ENCODE measurements at regions of chr15 and their contacts with region 1.

Region 1: DNA sequence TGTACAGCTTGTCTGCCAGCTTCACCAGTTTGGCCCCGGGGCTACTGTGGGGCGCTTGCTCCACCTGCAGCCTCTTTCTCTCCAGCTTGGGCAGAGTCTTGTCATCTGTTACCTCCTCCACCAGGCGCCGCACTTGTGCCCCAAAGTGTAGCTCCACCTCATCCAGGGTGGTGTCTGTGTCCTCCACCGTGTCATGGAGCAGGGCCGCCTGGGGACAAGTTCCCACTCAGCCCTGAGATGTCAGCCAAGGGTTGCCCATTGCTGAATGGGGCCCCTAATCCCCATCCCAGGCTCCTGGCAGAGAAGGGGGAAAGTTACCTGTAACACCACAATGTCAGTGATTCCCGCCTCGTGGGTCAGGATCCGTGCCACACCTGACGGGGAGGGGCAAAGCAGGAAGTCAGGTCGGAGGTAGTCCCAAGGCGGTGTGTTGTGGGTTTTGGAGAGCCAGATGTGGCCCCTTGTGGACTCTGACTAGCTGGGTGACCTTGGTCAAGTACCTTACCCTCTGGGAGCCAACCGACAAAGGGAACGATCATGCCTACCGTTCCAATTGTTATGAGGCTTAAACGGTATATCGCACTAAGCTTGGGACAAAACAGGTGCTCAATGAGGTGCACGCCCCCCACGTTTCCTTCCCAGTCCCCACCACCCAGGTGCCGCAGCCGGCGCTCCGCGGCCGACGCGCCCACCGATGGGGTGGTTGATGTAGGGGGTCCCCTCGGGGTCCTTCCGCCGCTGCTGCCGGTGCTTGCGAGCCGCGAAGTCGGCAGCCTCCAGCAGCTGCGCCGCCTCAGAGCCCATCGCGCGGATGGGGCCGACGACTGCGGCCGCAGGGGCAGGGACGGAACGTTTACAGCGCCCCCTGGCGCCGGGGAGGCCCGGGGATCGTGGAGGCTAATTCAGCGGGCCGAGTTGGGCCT is at the start of gene HDDC3:
- DNase-seq: peak; percentile 95
- ATAC-seq: peak; percentile 56
- H3K4me3 Mint-ChIP-seq: peak within 1 kb of the TSS; percentile 96
- H3K27ac Mint-ChIP-seq: peak within 1 kb of the TSS; percentile 97
- H3K4me1 Mint-ChIP-seq: peaks cover 53% of the 10 kb centered on the region
- H3K27me3 Mint-ChIP-seq: no peaks in the 10 kb centered on the region
- CTCF ChIP-seq: peak; percentile 85
- total RNA-seq, gene HDDC3: 17.6 and 19.0 TPM in 2 replicates

Region 2: GRCh38 chr15:89690276-89691218 is 1241.5 kb before region 1 on chr15 and contains the starts of genes PEX11A and WDR93:
- CTCF ChIA-PET with region 1: no interaction called
- POLR2A ChIA-PET with region 1: no interaction called
- intact Hi-C with region 1: loop called (anchors 5 kb)
- DNase-seq: peak; percentile 73
- ATAC-seq: peak; percentile 91
- H3K4me3 Mint-ChIP-seq: peak within 1 kb of the TSS; percentile 90
- H3K27ac Mint-ChIP-seq: peak within 1 kb of the TSS; percentile 77
- H3K4me1 Mint-ChIP-seq: peaks cover 19% of the 10 kb centered on the region
- H3K27me3 Mint-ChIP-seq: no peaks in the 10 kb centered on the region
- CTCF ChIP-seq: no peak
- total RNA-seq, gene PEX11A: 0.84 and 1.6 TPM in 2 replicates
- total RNA-seq, gene WDR93: 0.10 and 0.16 TPM in 2 replicates

Region 3: GRCh38 chr15:90233376-90234095 is 698.5 kb before region 1 on chr15 and contains the start of gene CIB1:
- CTCF ChIA-PET with region 1: no interaction called
- POLR2A ChIA-PET with region 1: interaction called, 7 read pairs
- intact Hi-C with region 1: loop called (anchors 5 kb)
- DNase-seq: peak; percentile 92
- ATAC-seq: peak; percentile 86
- H3K4me3 Mint-ChIP-seq: peak within 1 kb of the TSS; percentile 87
- H3K27ac Mint-ChIP-seq: peak within 1 kb of the TSS; percentile 97
- H3K4me1 Mint-ChIP-seq: peaks cover 50% of the 10 kb centered on the region
- H3K27me3 Mint-ChIP-seq: no peaks in the 10 kb centered on the region
- CTCF ChIP-seq: no peak
- total RNA-seq, gene CIB1: 96.6 and 105 TPM in 2 replicates

Region 4: DNA sequence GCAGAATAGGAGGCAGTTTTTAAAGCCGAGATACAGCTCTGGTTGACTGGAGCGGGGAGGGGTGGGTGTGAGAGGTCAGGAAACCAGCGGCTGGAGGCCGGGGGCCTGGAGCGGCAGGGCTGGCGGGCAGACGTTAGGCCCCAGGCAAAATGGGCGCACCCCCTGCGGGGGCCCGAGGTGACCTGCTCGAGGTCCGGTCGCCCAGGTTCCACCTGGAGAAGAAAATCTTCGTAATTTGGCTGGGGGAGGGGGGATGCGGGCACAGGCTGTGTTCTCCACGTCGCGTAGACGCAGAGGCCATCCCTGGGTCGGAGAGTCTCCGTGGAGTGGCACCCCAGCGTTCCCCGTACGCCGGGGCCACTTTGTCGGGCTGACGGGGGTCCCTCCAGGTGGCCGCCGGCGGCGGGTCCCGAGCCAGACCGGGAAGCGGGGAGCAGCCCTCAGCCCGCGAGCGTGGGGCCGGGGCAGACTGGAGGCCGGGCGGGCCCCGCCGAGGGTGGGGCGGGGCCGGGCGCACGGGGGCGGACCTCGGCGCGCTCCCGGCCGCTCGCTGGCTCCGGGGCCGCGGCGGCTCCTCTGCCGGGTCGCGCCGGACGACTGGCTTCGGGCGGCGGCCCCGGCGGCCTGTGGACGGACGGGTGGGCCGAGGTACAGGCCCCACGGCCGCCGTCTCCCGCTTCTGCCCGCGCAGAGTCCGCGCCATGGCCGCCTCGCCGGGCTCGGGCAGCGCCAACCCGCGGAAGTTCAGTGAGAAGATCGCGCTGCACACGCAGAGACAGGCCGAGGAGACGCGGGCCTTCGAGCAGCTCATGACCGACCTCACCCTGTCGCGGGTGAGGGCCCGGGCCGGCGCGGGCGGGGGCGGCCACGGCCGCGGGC is 402.4 kb before region 1 on chr15 and contains the start of gene CRTC3:
- CTCF ChIA-PET with region 1: no interaction called
- POLR2A ChIA-PET with region 1: interaction called, 4 read pairs
- intact Hi-C with region 1: loop called (anchors 5 kb)
- DNase-seq: peak; percentile 75
- ATAC-seq: peak; percentile 85
- H3K4me3 Mint-ChIP-seq: peak within 1 kb of the TSS; percentile 95
- H3K27ac Mint-ChIP-seq: peak within 1 kb of the TSS; percentile 88
- H3K4me1 Mint-ChIP-seq: peaks cover 45% of the 10 kb centered on the region
- H3K27me3 Mint-ChIP-seq: no peaks in the 10 kb centered on the region
- CTCF ChIP-seq: no peak
- total RNA-seq, gene CRTC3: 54.7 and 65.0 TPM in 2 replicates

Region 5: DNA sequence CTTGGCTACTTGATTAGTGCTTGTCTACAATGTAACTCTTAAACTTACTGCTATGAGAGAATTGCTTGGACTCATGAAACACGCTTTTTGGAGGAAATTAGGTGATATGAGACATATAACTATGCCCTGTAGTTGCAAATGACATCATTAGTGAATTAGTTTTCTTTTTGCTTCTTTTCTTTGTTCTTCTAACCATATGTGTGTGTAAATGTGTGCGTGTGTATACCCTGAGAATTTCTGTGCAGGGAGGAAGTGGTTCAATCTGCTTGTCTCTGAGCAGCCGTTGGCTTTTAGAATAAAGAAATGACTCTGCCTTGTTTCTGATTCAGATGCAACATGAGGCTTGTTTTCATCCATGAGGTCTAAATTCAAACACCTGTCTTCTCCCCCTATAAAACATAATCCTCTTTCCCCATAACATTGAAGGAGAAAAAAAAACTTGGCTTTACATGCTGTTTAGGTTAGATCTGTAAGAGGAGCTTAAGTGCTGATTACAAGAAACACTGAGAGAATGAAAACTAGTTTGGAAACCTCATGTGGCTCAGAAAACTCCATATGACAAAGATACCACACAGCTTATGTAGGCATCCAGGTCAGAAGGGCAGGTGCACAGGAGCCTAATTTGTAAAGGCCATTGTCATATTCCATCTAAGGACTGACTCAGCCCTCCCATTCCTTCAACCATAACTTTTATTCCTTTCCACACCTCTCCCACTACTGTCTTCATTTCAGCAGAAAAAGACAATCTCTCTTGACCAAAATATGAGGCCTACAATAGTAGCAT is 245.4 kb before region 1 on chr15:
- CTCF ChIA-PET with region 1: interaction called, 3 read pairs
- POLR2A ChIA-PET with region 1: interaction called, 16 read pairs
- intact Hi-C with region 1: no loop called
- DNase-seq: no peak
- ATAC-seq: peak; percentile 79
- H3K4me3 Mint-ChIP-seq: no peak overlapping the region
- H3K27ac Mint-ChIP-seq: peak overlapping the region; percentile 67
- H3K4me1 Mint-ChIP-seq: peaks cover 25% of the 10 kb centered on the region
- H3K27me3 Mint-ChIP-seq: peaks cover 2% of the 10 kb centered on the region
- CTCF ChIP-seq: no peak

Region 6: GRCh38 chr15:90869601-90870353 is 62.2 kb before region 1 on chr15:
- CTCF ChIA-PET with region 1: no interaction called
- POLR2A ChIA-PET with region 1: interaction called, 15 read pairs
- intact Hi-C with region 1: no loop called
- DNase-seq: no peak
- ATAC-seq: peak; percentile 47
- H3K4me3 Mint-ChIP-seq: peak overlapping the region; percentile 90
- H3K27ac Mint-ChIP-seq: peak overlapping the region; percentile 59
- H3K4me1 Mint-ChIP-seq: peaks cover 43% of the 10 kb centered on the region
- H3K27me3 Mint-ChIP-seq: no peaks in the 10 kb centered on the region
- CTCF ChIP-seq: no peak

Region 7: GRCh38 chr15:90921887-90922286 is 10.1 kb before region 1 on chr15:
- CTCF ChIA-PET with region 1: interaction called, 12 read pairs
- POLR2A ChIA-PET with region 1: interaction called, 8 read pairs
- intact Hi-C with region 1: no loop called
- DNase-seq: no peak
- ATAC-seq: no peak
- H3K4me3 Mint-ChIP-seq: no peak overlapping the region
- H3K27ac Mint-ChIP-seq: no peak overlapping the region
- H3K4me1 Mint-ChIP-seq: peaks cover 7% of the 10 kb centered on the region
- H3K27me3 Mint-ChIP-seq: no peaks in the 10 kb centered on the region
- CTCF ChIP-seq: no peak